ENCODE measurements at regions of chr1 and their contacts with region 1.

Region 1: GRCh38 chr1:243325305-243325890 is 69.6 kb downstream of the SDCCAG8 start:
- DNase-seq: no peak
- ATAC-seq: no peak

Region 2: DNA sequence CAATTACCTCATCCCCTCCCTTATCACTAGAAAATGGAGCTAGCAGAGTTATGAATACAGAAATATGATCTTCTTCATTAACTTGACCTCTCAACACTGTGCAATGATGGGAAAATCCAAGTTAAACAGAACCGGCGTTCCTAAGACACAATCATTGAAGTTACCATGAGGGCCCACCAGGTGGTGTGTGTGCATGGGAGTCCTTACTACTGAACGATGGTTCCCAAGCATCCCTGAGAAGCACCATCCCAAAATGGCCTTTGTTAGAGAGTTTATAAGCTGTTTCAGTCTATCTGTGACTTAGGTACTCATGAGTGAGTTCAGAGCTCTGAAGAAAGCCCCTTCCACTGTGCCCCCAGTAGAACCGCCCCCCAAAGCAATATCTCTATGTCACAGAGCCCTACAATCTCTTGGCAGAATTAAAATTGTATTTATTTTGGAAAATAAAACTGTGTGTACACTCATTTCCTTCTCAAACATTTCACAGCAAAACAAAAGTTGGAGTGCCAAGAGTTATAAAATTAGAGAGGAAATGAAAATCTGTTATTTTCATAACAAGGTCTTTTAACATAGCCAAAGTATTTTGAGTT is 857.7 kb before region 1 on chr1:
- intact Hi-C with region 1: loop called (anchors 10 kb)
- DNase-seq: no peak
- ATAC-seq: peak; percentile 72

Region 3: GRCh38 chr1:242847390-242847993 is 477.9 kb before region 1 on chr1:
- intact Hi-C with region 1: loop called (anchors 10 kb)
- DNase-seq: no peak
- ATAC-seq: no peak

Region 4: GRCh38 chr1:243447347-243447746 is 121.9 kb after region 1 on chr1:
- intact Hi-C with region 1: no loop called
- DNase-seq: no peak
- ATAC-seq: peak; percentile 73

Measured in Right ventricle myocardium inferior (tissue), 1 donor.